Endothelial cell of umbilical vein (primary cell): ENCODE measurements at regions of chrX and their contacts with region 1.

Region 1: DNA sequence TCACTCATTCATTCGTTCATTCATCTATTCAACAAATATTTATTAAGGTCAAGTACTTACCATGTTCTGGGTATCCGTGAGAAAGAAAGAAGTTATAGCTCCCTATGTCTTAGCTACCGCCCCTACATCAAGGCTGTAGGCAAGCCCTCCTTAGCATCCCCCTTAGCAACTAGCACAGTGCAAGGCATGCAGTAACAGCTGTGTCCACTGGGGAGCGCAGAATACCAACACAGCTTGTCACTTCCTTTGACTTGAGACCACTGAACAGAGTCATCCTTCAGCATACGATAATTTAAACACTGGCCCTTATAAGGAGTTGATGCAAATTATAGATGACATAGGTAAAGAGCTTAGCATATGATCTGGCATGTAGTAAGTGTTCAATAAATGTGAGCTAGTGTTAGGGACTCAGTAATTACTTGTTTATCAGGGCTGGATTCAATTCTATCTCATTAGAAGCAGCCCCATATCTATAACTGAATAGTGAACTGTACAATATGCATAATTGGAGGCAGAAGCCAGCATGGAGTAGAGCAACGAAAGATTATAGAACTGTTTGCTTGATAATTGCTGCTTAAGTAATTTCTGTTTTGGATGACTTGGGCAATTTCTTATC is 8.7 kb downstream of the KIAA1210 start:
- DNase-seq: peak; percentile 60
- H3K4me3 ChIP-seq: no peak overlapping the region
- H3K27ac ChIP-seq: no peak overlapping the region
- H3K4me1 ChIP-seq: no peaks in the 10 kb centered on the region
- H3K27me3 ChIP-seq: peaks cover 0 to 3% of the 10 kb centered on the region in 2 experiments
- CTCF ChIP-seq: peak; percentile 61
- POLR2A ChIP-seq: no peak

Region 2: DNA sequence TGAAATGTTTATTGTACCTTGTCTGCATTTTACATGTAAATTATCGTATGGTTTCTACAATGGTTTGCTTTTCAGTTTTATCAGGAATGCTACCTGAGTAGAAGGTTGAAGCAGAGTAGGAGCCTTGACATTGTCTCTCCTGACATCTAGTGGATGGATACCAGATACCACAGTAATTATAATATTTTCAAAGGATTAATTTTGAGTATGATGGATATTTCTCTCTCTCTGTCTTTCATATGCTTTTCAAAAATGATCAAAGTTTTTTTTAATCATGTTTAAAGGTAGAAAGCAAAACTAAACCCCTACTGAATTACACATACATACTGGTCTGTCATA is 892.8 kb before region 1 on chrX:
- CTCF ChIA-PET with region 1: no interaction called
- POLR2A ChIA-PET with region 1: no interaction called
- dilution Hi-C with region 1: no loop called
- intact Hi-C with region 1: no loop called
- DNase-seq: peak; percentile 65
- H3K4me3 ChIP-seq: no peak overlapping the region
- H3K27ac ChIP-seq: peak overlapping the region; percentile 86
- H3K4me1 ChIP-seq: peaks cover 31% of the 10 kb centered on the region
- H3K27me3 ChIP-seq: no peaks in the 10 kb centered on the region
- CTCF ChIP-seq: peak; percentile 11 to 24
- POLR2A ChIP-seq: no peak

Region 3: DNA sequence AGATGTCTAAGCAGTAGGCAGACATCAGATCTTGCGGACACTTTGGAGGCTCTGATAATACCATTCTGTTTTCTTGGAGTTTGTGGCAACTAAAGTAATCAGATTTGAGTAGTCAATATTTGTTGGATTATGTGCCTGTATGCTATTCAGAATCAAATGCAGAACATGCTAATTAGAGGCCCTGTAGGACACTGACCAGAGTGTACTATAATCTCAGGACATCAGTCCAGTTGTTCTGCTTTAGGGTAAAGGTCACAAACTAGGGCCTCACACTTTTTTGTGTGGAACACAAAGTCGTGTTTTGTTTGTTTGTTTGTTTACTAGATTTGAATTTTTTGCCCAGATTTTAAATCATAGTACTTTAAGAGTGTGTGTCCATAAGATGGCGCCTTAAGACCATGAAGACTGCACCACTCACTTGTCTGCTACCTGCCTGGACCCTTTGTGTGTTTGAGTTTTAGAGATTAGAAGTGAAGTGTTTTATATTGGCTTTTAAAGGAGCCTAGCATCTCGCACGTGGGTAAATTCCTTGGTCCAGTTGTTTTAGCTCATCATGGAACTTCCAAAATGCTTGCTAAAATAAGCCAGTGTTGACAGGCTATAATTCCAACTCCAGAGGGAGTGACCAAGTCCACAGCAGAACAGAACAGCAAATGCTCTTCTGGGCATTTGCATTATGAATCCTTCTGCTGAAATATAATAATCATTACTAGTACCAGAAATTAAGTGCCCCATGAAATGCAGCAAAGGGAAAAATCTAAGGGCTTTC is 356.8 kb before region 1 on chrX:
- CTCF ChIA-PET with region 1: no interaction called
- POLR2A ChIA-PET with region 1: no interaction called
- dilution Hi-C with region 1: no loop called
- intact Hi-C with region 1: no loop called
- DNase-seq: no peak
- H3K4me3 ChIP-seq: no peak overlapping the region
- H3K27ac ChIP-seq: no peak overlapping the region
- H3K4me1 ChIP-seq: no peaks in the 10 kb centered on the region
- H3K27me3 ChIP-seq: no peaks in the 10 kb centered on the region
- CTCF ChIP-seq: no peak
- POLR2A ChIP-seq: no peak

Region 4: DNA sequence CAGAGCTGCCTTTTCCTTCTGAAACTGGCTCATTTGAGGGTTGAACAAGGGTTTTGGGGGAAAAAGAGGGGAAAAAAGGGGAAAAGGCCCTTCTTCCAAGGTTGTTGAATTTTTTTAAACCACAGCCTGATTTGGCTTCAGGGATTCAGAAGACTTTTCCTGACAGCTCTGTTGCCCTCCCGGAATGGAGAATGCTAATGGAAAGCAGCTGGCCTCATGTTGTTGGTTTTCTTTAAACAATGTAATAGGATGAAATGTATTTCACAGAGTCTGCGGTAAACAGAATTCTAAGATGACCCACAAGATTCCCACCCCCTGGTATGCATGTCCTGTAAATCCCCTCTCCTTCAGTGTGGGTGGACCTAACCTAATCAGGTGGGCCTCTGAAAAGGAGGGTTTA is 12.0 kb after region 1 on chrX:
- CTCF ChIA-PET with region 1: interaction called, 12 read pairs
- POLR2A ChIA-PET with region 1: no interaction called
- dilution Hi-C with region 1: no loop called
- intact Hi-C with region 1: no loop called
- DNase-seq: no peak
- H3K4me3 ChIP-seq: no peak overlapping the region
- H3K27ac ChIP-seq: no peak overlapping the region
- H3K4me1 ChIP-seq: no peaks in the 10 kb centered on the region
- H3K27me3 ChIP-seq: no peaks in the 10 kb centered on the region
- CTCF ChIP-seq: no peak
- POLR2A ChIP-seq: no peak

Region 5: GRCh38 chrX:119181491-119181890 is 62.6 kb after region 1 on chrX:
- CTCF ChIA-PET with region 1: interaction called, 11 read pairs
- POLR2A ChIA-PET with region 1: no interaction called
- dilution Hi-C with region 1: no loop called
- intact Hi-C with region 1: loop called (anchors 2 kb)
- DNase-seq: no peak
- H3K4me3 ChIP-seq: no peak overlapping the region
- H3K27ac ChIP-seq: no peak overlapping the region
- H3K4me1 ChIP-seq: no peaks in the 10 kb centered on the region
- H3K27me3 ChIP-seq: no peaks in the 10 kb centered on the region
- CTCF ChIP-seq: peak in 1 of 2 donors; percentile 10
- POLR2A ChIP-seq: no peak

Region 6: GRCh38 chrX:119194621-119195020 is 75.7 kb after region 1 on chrX:
- CTCF ChIA-PET with region 1: interaction called, 36 read pairs
- POLR2A ChIA-PET with region 1: no interaction called
- dilution Hi-C with region 1: no loop called
- intact Hi-C with region 1: loop called (anchors 2 kb)
- DNase-seq: peak; percentile 5
- H3K4me3 ChIP-seq: no peak overlapping the region
- H3K27ac ChIP-seq: no peak overlapping the region
- H3K4me1 ChIP-seq: no peaks in the 10 kb centered on the region
- H3K27me3 ChIP-seq: no peaks in the 10 kb centered on the region
- CTCF ChIP-seq: peak in 1 of 2 donors; percentile 18
- POLR2A ChIP-seq: no peak

Region 7: DNA sequence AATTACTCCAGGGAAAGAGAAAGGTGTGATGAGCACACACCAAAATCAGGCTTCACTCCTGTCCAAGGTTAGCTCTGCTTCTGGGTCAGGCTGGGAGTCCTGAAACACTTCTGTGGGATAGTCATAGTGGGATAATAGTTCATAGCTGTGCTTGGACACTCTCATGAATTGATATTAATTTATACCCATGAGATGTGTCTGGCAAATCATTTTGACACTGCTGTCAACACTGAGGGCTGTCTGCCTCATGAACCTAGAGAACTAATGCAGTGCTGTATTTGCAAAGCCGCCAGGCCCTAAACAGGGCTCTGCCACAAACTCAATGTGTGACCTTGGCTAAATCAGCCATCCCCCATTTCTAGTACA is 92.7 kb after region 1 on chrX:
- CTCF ChIA-PET with region 1: interaction called, 16 read pairs
- POLR2A ChIA-PET with region 1: no interaction called
- dilution Hi-C with region 1: no loop called
- intact Hi-C with region 1: no loop called
- DNase-seq: no peak
- H3K4me3 ChIP-seq: no peak overlapping the region
- H3K27ac ChIP-seq: no peak overlapping the region
- H3K4me1 ChIP-seq: no peaks in the 10 kb centered on the region
- H3K27me3 ChIP-seq: no peaks in the 10 kb centered on the region
- CTCF ChIP-seq: no peak
- POLR2A ChIP-seq: no peak

Region 8: DNA sequence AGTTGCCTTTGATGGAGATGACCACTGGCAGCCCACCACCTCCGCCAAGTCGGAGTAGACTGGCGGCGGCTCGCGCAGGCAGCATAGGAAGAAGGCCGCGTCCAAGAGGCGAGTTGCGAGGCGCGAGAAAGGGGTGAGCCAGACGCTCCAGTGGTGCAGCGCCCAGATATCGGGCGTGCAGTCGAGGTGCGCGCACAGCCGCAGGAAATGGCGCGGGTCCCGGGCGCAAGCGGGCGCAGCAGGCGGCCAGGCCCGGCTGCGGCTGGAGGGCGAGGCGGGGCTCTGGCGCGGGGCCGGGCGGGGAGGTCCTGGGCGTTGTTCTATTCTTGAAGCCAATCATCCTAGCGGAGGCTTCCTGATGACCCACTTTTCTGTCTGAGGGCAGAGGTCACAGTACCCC is 104.0 kb after region 1 on chrX:
- CTCF ChIA-PET with region 1: interaction called, 16 read pairs
- POLR2A ChIA-PET with region 1: no interaction called
- dilution Hi-C with region 1: no loop called
- intact Hi-C with region 1: loop called (anchors 1 kb)
- DNase-seq: no peak
- H3K4me3 ChIP-seq: no peak overlapping the region
- H3K27ac ChIP-seq: no peak overlapping the region
- H3K4me1 ChIP-seq: no peaks in the 10 kb centered on the region
- H3K27me3 ChIP-seq: peaks cover 0 to 5% of the 10 kb centered on the region in 2 experiments
- CTCF ChIP-seq: no peak
- POLR2A ChIP-seq: no peak

Region 9: DNA sequence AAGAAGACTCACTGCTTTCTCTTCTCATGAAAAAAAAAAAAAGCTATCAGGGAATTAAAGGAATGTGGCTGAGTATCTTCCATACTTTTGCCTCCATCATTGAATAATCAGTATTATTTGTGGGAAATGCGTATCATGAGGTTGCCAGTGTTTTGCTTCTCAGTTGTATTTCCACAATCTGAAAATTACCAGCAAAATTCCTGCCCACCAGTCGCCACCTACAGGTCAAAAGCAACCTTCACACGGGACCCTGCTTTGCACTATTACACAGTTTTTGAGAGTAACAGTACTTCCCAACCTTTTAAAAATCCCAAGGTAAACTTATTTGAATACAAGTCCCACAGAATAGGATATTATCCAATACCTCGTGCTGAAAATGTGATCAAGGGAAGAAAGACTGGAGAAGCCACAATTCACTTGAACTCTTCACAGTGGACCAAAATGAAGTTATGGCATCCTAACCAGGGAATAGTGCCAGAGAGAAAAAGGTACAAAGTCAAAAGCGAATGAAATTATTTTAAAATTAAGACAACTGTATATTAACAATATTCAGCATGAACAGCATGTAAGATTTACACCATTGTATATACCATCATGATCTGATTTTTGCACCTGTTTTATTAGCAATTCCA is 147.6 kb after region 1 on chrX:
- CTCF ChIA-PET with region 1: no interaction called
- POLR2A ChIA-PET with region 1: no interaction called
- dilution Hi-C with region 1: no loop called
- intact Hi-C with region 1: loop called (anchors 1 kb)
- DNase-seq: peak; percentile 23
- H3K4me3 ChIP-seq: no peak overlapping the region
- H3K27ac ChIP-seq: no peak overlapping the region
- H3K4me1 ChIP-seq: no peaks in the 10 kb centered on the region
- H3K27me3 ChIP-seq: no peaks in the 10 kb centered on the region
- CTCF ChIP-seq: peak; percentile 53 to 62
- POLR2A ChIP-seq: no peak